Left cardiac atrium (tissue), 4 donors: ENCODE measurements at regions of chr6 and their contacts with region 1.

Region 1: DNA sequence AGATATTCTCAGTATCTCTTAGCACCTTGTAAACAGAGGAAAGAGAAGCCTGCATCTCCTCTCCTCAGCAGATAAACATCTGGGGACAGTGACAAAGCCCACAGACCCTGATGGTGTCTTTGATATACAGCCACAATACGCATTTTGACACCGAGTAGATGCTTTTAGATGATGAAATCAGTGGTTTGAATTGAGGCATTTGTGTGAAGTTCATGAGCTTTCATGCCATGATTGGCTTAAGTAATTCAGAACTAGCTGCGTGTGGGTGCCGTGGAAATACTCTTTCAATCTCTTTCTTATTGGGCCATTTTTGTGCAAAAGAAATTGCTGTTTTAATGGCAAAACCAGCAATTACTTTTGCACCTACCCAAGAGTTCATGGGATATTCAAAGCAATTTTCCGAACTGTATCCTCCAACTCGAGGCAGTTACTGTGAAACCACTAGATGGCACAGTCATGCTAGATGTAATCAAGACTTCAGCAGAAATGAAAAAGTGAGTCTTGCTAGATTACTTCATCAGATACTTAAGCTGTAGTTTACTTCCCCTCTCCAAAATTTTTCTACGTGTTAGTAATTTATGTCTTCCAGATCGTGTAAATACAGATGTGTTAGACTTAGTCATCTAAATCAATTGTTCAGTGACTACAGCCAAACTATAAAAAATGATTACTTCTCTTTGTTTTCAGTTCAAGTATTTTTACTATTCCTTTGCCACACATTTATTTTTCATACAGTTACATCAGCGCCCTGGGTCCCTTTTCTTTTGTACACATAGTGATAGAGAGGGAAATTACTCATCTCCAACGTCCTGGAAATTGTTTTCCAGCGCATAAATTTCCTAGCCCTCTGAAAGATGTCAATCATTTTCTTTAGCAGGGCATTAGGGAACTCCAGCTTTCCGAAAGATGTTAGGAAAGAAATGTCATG is 49.4 kb downstream of the IYD start:
- DNase-seq: no peak
- ATAC-seq: peak; percentile 90

Region 2: DNA sequence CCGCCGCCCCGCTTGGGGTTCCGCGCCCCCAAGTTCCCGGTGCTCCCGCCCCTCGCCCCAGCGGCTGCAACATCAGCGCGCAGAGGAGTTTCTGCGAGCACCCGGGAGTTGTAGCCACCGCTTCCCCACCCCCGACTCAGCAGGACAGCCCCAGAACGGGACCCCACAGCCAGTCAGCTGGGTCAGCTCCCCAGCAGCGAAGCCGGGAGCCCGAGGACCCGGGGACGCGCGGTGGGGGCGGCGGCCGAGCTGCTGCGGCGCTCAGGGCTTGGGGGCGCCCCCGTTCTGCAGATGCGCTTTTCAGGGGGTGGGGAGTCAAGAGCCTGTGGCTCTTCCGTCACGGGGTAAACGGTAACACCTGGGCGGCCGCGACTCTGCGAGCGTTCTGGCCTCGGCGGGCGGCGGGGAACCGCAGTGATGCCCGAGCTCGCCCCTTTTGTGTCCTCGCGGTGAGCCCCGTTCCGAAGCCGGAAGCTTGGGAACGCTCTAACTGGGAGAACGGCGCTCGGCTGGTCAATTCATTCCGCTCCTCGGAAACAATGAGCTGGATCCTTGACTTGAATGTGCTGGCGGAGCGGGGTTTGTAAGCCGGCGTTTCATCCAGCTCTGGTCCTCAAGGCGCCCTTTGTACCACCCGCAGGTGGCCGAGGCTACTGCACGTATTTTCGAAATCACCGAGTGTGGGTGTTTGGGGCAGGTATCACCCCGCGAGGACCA is 182.3 kb after region 1 on chr6:
- intact Hi-C with region 1: loop called in 1 of 2 experiments (anchors 5 kb)
- DNase-seq: peak; percentile 80
- ATAC-seq: peak; percentile 70 to 78

Region 3: DNA sequence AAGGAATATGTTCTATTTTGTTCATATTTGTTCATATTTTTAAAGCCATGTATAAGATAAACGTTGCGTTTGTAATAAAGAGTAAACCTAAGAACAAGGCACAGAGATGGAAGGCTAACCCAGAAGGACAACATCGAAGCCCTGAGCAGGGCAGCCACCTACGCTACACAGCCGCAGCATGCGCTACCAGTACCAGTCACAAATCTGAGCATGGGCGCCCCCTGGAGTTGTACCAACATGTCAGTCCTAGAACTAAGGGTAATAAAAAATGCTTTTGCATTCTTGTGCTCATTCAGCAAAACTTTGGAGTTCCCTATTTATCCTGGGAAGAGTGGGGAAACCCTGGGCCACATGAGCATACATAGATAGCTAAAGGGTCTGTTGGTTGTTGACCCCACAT is 252.1 kb after region 1 on chr6:
- intact Hi-C with region 1: loop called in 1 of 2 experiments (anchors 10 kb)
- DNase-seq: no peak
- ATAC-seq: no peak

Region 4: DNA sequence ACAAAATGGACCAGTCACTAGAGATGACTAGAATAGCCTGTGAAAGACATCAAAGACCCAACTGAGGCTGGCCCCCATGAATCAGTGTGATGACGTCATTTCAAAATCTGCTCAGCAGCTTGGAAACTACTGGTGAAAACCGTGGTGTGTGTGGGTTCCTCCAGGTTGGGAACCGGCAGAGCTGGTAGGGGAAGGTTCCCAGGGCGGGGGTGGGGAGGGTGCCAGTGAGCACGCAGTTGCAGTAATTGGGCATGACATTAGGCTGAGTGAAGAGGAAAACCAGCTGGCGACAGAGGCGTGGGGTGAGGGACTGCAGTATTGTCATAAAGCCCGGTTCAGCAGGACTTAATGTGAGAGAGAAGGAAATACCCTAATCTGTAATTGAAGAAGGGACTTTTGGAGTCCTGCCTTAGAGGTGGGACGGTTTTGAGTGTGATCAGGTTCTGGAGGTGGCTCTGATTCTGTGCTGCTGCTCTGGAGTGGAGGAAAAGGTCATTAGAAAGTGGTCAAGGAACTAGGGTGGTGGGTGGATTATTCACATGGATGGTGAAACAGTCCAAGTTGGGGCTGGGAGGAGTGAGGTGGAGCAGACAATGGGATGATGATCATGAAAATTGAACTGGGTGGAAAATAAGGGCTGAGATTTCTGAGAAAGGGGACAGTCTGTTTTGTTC is 395.3 kb after region 1 on chr6:
- intact Hi-C with region 1: loop called (anchors 1 to 2 kb)
- DNase-seq: no peak
- ATAC-seq: peak in 1 of 2 donors; percentile 15